ENCODE measurements at regions of chr17 and their contacts with region 1.

Region 1: GRCh38 chr17:74659898-74660297 is 36.4 kb upstream of the CD300E start:
- DNase-seq: no peak
- H3K4me3 Mint-ChIP-seq: no peak overlapping the region
- H3K27ac Mint-ChIP-seq: no peak overlapping the region
- H3K4me1 Mint-ChIP-seq: peaks cover 9% of the 10 kb centered on the region
- H3K27me3 Mint-ChIP-seq: peaks cover 62% of the 10 kb centered on the region

Region 2: GRCh38 chr17:74552037-74552436 is 107.9 kb before region 1 on chr17:
- CTCF ChIA-PET with region 1: no interaction called
- POLR2A ChIA-PET with region 1: no interaction called
- DNase-seq: no peak
- H3K4me3 Mint-ChIP-seq: no peak overlapping the region
- H3K27ac Mint-ChIP-seq: no peak overlapping the region
- H3K4me1 Mint-ChIP-seq: peaks cover 26% of the 10 kb centered on the region
- H3K27me3 Mint-ChIP-seq: peaks cover 6% of the 10 kb centered on the region

Region 3: GRCh38 chr17:74671031-74671771 is 11.3 kb after region 1 on chr17:
- CTCF ChIA-PET with region 1: interaction called, 17 read pairs
- POLR2A ChIA-PET with region 1: no interaction called
- DNase-seq: peak; percentile 83
- H3K4me3 Mint-ChIP-seq: no peak overlapping the region
- H3K27ac Mint-ChIP-seq: no peak overlapping the region
- H3K4me1 Mint-ChIP-seq: peaks cover 3% of the 10 kb centered on the region
- H3K27me3 Mint-ChIP-seq: peaks cover 66% of the 10 kb centered on the region

Region 4: DNA sequence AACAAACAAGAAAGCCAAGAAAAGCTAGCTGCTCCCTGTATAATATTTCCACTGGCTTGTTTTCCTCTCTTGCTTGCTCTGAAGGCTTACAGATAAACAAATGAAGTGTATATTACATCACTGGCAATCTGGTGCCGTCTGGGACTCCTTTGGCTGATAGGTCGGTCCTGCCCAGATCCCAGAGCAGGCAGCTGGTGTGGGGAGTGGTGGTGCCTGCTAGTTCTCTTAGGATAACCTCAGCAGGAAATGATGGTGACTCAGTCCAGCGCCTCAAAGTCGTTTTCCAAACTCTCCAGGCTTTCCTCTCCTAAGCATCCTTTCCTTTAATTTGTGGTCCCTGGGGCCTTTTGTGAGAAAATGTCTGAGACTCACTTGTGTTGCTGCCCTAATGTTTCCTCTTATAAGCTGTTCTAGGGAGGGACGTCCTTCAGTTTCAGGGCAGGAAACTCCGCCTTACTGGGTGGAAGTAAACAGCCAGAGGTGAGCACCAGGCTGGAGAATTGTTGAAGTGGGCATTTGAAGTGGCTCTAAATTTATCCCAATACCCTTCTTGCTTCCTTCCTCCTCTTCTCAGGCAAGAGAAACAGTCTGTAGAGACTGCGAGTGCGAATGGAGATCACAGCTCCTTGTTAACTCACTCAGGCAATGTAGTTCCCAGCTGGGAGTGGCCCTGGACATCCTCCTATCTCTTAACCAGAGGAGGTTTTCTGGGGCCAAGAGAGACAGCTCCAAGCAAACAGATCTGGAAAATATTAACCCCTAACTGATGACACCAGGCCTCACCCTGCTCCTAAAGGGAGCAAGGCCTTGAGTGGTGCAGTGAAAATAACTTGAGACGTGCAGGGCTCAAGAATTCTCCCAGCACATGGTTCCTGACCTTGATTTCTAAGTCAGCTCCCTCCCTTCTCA is 17.9 kb after region 1 on chr17:
- CTCF ChIA-PET with region 1: interaction called, 16 read pairs
- POLR2A ChIA-PET with region 1: no interaction called
- DNase-seq: peak; percentile 16
- H3K4me3 Mint-ChIP-seq: peak overlapping the region; percentile 4
- H3K27ac Mint-ChIP-seq: peak overlapping the region; percentile 48
- H3K4me1 Mint-ChIP-seq: peaks cover 22% of the 10 kb centered on the region
- H3K27me3 Mint-ChIP-seq: peaks cover 41% of the 10 kb centered on the region

Region 5: GRCh38 chr17:74736513-74737298 is 76.8 kb after region 1 on chr17 and contains the start of gene RAB37:
- CTCF ChIA-PET with region 1: interaction called, 58 read pairs
- POLR2A ChIA-PET with region 1: interaction called, 13 read pairs
- DNase-seq: peak; percentile 39
- H3K4me3 Mint-ChIP-seq: peak within 1 kb of the TSS; percentile 83
- H3K27ac Mint-ChIP-seq: peak within 1 kb of the TSS; percentile 91
- H3K4me1 Mint-ChIP-seq: peaks cover 55% of the 10 kb centered on the region
- H3K27me3 Mint-ChIP-seq: peaks cover 18% of the 10 kb centered on the region
- total RNA-seq, gene RAB37: 28.2 to 30.4 TPM

Region 6: GRCh38 chr17:74742153-74742515 is 82.2 kb after region 1 on chr17:
- CTCF ChIA-PET with region 1: interaction called, 58 read pairs
- POLR2A ChIA-PET with region 1: interaction called, 13 read pairs
- DNase-seq: peak; percentile 82
- H3K4me3 Mint-ChIP-seq: peak overlapping the region; percentile 67
- H3K27ac Mint-ChIP-seq: peak overlapping the region; percentile 96
- H3K4me1 Mint-ChIP-seq: peaks cover 91% of the 10 kb centered on the region
- H3K27me3 Mint-ChIP-seq: no peaks in the 10 kb centered on the region

Region 7: DNA sequence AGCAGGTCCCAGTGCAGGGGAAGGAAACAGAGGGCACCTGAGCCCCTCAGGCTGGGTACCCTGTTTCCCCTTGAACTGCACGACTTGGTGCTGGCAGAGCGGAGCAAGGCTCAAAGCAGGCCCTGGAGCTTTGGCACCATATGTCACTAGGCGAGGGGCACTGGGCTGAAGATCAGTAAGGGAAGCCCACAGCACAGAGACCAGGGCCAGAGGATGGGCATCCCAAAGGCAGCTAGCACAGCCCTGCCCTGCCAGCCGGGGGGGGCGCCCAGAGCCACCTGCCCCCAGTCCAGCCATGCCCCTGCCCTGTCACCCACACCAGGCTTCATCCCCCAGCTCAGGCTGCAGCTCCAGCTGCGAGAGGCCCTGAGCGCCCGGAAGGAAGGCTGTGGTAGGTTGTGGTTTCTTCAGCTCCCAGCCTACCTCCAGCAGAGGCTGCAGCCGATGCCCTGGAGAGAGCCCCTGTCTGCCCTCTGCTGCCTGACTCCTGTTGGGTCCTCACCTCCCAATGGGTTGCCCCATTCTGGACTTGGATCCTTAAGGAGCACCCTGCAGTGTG is 99.4 kb after region 1 on chr17:
- CTCF ChIA-PET with region 1: interaction called, 16 read pairs
- POLR2A ChIA-PET with region 1: no interaction called
- DNase-seq: peak; percentile 74
- H3K4me3 Mint-ChIP-seq: peak overlapping the region; percentile 71
- H3K27ac Mint-ChIP-seq: peak overlapping the region; percentile 80
- H3K4me1 Mint-ChIP-seq: peaks cover 70% of the 10 kb centered on the region
- H3K27me3 Mint-ChIP-seq: no peaks in the 10 kb centered on the region

Region 8: DNA sequence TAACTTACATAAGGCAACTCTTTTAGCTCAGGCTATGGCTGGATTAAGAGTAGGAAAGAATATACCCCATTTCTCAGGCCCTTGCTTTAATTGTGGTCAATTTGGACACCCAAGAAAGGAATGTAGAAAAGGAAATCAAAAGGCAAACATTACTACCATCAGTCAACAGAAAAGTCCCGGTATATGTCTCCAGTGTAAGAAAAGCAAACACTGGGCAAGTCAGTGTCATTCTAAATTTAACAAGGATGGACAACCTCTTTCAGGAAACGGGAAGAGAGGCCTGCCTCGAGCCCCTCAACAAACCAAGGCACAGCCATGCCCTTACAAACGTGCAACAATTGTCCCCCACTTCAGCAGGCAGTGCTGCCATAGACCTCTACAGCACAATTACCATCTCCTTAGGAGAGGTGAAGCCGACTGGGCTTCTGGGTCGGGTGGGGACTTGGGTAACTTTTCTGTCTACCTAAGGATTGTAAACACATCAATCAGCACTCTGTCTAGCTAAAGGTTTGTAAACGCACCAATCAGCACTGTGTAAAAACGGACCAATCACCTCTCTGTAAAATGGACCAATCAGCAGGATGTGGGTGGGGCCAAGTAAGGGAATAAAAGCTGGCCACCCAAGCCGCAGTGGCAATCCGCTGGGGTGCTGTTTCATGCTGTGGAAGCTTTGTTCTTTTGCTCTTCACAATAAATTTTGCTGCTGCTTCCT is 364.9 kb after region 1 on chr17:
- CTCF ChIA-PET with region 1: no interaction called
- POLR2A ChIA-PET with region 1: no interaction called
- DNase-seq: peak; percentile 53
- H3K4me3 Mint-ChIP-seq: peak overlapping the region; percentile 33
- H3K27ac Mint-ChIP-seq: peak overlapping the region; percentile 31
- H3K4me1 Mint-ChIP-seq: peaks cover 30% of the 10 kb centered on the region
- H3K27me3 Mint-ChIP-seq: peaks cover 9% of the 10 kb centered on the region

Region 9: GRCh38 chr17:75077496-75078283 is 417.8 kb after region 1 on chr17:
- CTCF ChIA-PET with region 1: no interaction called
- POLR2A ChIA-PET with region 1: no interaction called
- DNase-seq: peak; percentile 48
- H3K4me3 Mint-ChIP-seq: peak overlapping the region; percentile 44
- H3K27ac Mint-ChIP-seq: peak overlapping the region; percentile 80
- H3K4me1 Mint-ChIP-seq: peaks cover 28% of the 10 kb centered on the region
- H3K27me3 Mint-ChIP-seq: no peaks in the 10 kb centered on the region